ENCODE measurements at regions of chr11 and their contacts with region 1.

Region 1: DNA sequence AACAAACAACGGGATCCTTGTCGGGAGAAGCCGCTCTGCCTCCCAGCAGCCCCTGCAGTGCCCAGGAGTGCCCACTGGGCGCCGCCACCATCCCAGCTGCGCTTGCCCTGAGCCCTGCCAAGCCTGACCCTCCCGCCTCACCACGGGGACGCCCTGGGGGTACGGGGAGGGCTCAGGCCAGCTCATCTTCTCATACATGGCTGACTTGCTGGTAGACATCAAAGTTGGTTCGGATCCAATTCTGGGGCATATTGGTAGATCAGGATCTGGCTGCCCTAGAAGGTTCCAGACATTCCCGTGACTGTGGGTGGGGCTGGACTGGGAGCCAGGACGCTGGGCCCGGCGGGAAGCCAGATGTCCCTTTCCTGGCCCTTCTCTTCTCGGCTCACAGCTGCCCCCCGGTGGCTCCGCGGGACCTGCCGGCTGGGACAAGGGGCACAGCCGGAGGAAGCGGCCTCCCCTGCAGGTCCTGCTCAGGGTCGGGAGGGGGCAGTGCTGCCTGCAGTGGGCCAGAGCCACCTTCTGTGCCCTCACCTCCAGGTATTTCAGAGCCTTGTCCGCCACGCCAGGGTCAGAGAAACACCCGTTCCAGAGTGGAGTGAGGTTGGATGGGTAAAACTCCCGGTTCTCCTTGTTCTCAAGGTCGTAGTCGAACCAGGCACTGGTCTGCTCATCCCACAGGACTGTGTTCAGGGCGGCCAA is 10.6 kb upstream of the TREH start:
- DNase-seq: peak; percentile 91
- H3K4me3 ChIP-seq: peak overlapping the region; percentile 46
- H3K27ac ChIP-seq: no peak overlapping the region
- H3K4me1 ChIP-seq: peaks cover 7% of the 10 kb centered on the region
- CTCF ChIP-seq: peak; percentile 98

Region 2: GRCh38 chr11:118771547-118772288 is 81.7 kb after region 1 on chr11:
- CTCF ChIA-PET with region 1: no interaction called
- POLR2A ChIA-PET with region 1: interaction called, 3 read pairs
- intact Hi-C with region 1: loop called (anchors 5 kb)
- DNase-seq: no peak
- H3K4me3 ChIP-seq: no peak overlapping the region
- H3K27ac ChIP-seq: no peak overlapping the region
- H3K4me1 ChIP-seq: peaks cover 19% of the 10 kb centered on the region
- CTCF ChIP-seq: no peak

Region 3: GRCh38 chr11:118807800-118808778 is 118.1 kb after region 1 on chr11:
- CTCF ChIA-PET with region 1: no interaction called
- POLR2A ChIA-PET with region 1: no interaction called
- intact Hi-C with region 1: no loop called
- DNase-seq: no peak
- H3K4me3 ChIP-seq: no peak overlapping the region
- H3K27ac ChIP-seq: no peak overlapping the region
- H3K4me1 ChIP-seq: peaks cover 7% of the 10 kb centered on the region
- CTCF ChIP-seq: no peak

Region 4: GRCh38 chr11:118907051-118908042 is 217.3 kb after region 1 on chr11:
- CTCF ChIA-PET with region 1: no interaction called
- POLR2A ChIA-PET with region 1: no interaction called
- intact Hi-C with region 1: loop called (anchors 2 kb)
- DNase-seq: peak; percentile 87
- H3K4me3 ChIP-seq: no peak overlapping the region
- H3K27ac ChIP-seq: no peak overlapping the region
- H3K4me1 ChIP-seq: peaks cover 47% of the 10 kb centered on the region
- CTCF ChIP-seq: peak; percentile 96